ENCODE measurements at regions of chr21 and their contacts with region 1.

Region 1: GRCh38 chr21:36504067-36505058 is 24.4 kb upstream of the CLDN14 start:
- DNase-seq: no peak
- H3K4me3 ChIP-seq: no peak overlapping the region
- H3K27ac ChIP-seq: no peak overlapping the region
- H3K4me1 ChIP-seq: peaks cover 22% of the 10 kb centered on the region
- H3K27me3 ChIP-seq: no peaks in the 10 kb centered on the region
- CTCF ChIP-seq: peak; percentile 56 to 90 (median 72)
- POLR2A ChIP-seq: no peak

Region 2: GRCh38 chr21:36927719-36928117 is 423.4 kb after region 1 on chr21:
- intact Hi-C with region 1: loop called (anchors 5 kb)
- DNase-seq: no peak
- H3K4me3 ChIP-seq: no peak overlapping the region
- H3K27ac ChIP-seq: no peak overlapping the region
- H3K4me1 ChIP-seq: peaks cover 8% of the 10 kb centered on the region
- H3K27me3 ChIP-seq: no peaks in the 10 kb centered on the region
- CTCF ChIP-seq: peak; percentile 72 to 93 (median 74)
- POLR2A ChIP-seq: no peak

Measured in vagina (tissue), 2 donors.